B cell (primary cell): ENCODE measurements at regions of chr13 and their contacts with region 1.

Region 1: DNA sequence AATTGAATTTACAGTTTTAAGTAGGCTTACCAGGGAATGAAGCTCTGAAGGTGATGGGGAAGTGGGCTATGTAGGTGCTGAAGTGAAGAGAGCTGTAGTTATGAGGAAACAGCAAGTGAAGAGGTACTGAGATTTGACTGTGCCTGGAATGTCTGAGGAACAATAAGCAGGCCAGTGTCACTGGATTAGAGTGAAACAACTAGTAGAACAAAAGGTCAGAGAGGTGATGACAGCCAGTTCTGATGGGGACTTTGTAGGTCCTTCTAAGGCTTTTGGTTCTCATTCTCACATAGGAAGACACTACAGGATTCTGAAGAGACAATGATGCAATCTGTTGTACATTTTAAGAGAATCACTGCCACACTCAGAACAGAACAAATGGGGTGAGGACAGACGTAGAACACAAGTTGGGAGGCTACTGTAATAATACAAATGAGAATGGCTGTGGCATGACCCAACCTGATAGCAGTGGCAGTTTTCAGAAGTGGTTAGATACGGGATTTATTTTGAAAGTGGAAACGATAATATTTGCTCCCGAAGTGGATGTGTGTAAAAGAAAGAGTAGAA is 130.8 kb downstream of the MYCBP2 start:
- DNase-seq: no peak
- ATAC-seq: no peak
- H3K4me3 ChIP-seq: no peak overlapping the region
- H3K4me3 Mint-ChIP-seq: no peak overlapping the region
- H3K27ac ChIP-seq: no peak overlapping the region
- H3K27ac Mint-ChIP-seq: no peak overlapping the region
- H3K4me1 ChIP-seq: no peaks in the 10 kb centered on the region
- H3K4me1 Mint-ChIP-seq: no peaks in the 10 kb centered on the region
- H3K27me3 ChIP-seq: no peaks in the 10 kb centered on the region
- H3K27me3 Mint-ChIP-seq: no peaks in the 10 kb centered on the region
- CTCF ChIP-seq: no peak

Region 2: DNA sequence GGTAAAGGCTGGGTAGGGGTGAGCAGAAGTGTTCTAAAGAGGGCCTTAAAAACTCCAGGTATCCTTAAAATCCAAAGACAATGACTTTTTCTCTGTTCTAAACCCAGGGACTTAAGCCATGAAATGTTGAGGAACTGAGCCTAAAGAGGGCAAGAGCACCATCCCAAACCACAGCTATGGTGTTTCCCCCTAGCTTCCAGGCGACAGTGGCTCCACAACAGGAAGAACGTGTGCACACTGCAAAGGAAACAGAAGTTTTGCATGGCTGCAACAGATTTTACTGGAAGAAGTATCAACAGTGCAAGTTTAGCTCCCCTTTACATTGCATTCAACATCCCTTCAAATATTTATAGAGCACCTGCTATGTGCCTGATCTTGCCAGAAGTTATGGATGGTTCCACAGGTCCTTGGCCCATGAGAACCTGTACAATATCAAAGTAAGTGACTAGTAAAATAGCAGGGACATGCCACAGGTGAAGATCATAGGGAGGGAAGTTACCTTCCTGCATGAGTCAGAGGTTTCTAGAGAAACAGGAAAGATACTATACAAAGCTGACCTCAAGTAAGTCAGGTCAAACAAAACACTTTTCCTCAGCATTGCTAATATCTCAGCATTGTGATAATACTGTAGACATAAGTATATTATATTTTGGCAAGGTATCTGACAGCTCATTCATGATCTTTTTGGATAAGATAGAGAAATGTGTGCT is 301.6 kb before region 1 on chr13:
- CTCF ChIA-PET with region 1: no interaction called
- POLR2A ChIA-PET with region 1: no interaction called
- intact Hi-C with region 1: no loop called
- DNase-seq: no peak
- ATAC-seq: no peak
- H3K4me3 ChIP-seq: no peak overlapping the region
- H3K4me3 Mint-ChIP-seq: no peak overlapping the region
- H3K27ac ChIP-seq: no peak overlapping the region
- H3K27ac Mint-ChIP-seq: no peak overlapping the region
- H3K4me1 ChIP-seq: no peaks in the 10 kb centered on the region
- H3K4me1 Mint-ChIP-seq: no peaks in the 10 kb centered on the region
- H3K27me3 ChIP-seq: no peaks in the 10 kb centered on the region
- H3K27me3 Mint-ChIP-seq: peaks cover 13% of the 10 kb centered on the region
- CTCF ChIP-seq: no peak

Region 3: DNA sequence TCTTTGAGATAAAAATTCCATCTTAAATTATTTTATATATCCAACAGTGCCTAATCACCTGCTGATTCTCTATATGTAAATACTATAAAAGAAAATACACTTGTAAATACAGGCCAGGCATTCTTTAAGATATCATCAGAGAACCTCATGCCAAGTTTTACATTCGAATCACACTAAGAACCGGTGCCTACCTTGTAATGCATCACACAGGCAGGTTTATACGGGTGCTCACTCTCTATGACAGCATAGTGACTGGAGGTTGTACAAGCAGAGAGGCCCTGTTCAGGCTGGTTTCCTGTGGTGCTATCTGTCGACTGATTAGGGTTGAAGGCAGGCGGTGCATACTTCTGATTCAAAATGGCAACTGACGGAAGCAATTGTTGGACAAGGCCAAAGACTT is 27.9 kb before region 1 on chr13:
- CTCF ChIA-PET with region 1: no interaction called
- POLR2A ChIA-PET with region 1: no interaction called
- intact Hi-C with region 1: loop called (anchors 5 kb)
- DNase-seq: no peak
- ATAC-seq: no peak
- H3K4me3 ChIP-seq: no peak overlapping the region
- H3K4me3 Mint-ChIP-seq: no peak overlapping the region
- H3K27ac ChIP-seq: no peak overlapping the region
- H3K27ac Mint-ChIP-seq: peak overlapping the region; percentile 2
- H3K4me1 ChIP-seq: no peaks in the 10 kb centered on the region
- H3K4me1 Mint-ChIP-seq: no peaks in the 10 kb centered on the region
- H3K27me3 ChIP-seq: no peaks in the 10 kb centered on the region
- H3K27me3 Mint-ChIP-seq: no peaks in the 10 kb centered on the region
- CTCF ChIP-seq: no peak